Posterior vena cava (tissue), 2 donors: ENCODE measurements at regions of chr10 and their contacts with region 1.

Region 1: GRCh38 chr10:21732067-21732772 is 198.2 kb downstream of the MLLT10 start:
- DNase-seq: peak; percentile 82

Region 2: DNA sequence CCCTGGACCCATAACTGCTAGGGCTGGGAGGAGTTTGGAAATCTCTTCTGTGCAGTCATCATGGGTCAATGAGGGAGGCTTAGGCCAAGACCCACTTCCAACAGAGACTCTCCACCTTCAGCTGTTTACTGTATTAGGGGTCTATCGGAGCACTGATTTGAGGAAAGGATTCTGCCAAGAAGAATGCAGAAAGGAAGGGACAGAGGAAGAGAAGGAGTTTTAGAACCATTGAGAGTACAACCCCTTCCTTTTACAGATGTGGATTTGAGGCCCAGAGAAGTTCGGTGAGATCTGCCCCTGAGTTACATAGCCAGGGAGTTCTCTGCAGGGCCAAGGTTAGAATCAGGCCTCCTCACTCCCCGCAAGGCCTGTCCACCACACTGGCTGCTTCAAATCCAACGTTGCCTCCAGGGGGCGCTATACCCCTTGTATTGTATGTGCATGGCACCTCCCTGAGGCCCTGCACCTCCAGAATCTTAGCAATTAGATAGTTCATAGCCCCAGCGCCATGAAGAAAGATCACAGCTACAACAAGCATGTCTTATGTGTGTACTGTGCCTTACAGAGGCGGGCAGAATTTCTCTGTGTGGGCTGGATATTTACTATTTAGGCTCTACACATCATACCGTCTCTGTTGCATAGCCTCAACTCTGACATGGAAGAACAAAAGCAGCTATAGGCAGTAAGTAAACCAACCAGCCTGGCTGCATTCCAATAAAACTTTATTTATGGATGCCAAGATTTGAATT is 453.6 kb before region 1 on chr10:
- intact Hi-C with region 1: loop called in 1 of 2 experiments (anchors 10 kb)
- DNase-seq: peak; percentile 97

Region 3: DNA sequence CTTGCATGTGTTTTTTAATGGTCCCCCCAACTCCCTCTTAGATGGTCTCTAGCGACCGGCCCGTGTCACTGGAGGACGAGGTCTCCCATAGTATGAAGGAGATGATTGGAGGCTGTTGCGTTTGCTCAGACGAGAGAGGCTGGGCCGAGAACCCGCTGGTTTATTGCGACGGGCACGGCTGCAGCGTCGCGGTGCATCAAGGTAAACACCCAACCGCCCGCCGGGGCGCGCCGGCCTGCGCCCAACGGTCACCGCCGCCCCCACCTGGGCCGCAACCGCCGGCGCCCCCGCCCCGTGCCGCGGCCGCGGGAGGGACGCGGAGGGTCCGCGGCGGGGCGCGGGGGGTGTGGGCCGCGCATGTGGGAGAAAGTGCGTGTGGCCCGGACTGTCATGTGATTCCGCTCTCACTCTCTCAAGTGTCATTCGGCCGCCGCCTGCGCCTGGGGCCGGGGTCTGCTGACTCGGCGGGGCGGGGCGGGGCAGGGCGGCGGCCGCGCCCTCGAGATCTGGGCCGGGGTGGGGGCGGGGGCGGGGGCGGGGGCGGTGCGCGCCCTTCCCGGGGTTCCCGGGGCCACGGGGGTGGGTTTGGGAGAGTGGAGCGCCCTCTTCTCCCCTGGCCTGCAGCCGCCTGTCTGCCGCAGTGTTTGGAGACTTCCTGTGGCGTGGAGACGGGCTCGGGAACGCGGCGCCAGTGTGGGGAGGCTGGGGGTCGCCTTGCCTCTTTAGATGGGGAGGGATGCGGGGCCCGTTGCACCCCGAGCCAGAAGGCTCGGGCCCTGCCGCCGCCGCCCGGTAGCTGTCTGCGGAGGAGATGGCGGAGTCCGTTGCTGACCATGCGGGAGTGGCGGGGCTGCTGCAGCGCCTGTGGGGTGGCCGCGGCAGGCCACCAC is 197.4 kb before region 1 on chr10:
- intact Hi-C with region 1: loop called in 1 of 2 experiments (anchors 5 kb)
- DNase-seq: peak; percentile 87

Region 4: GRCh38 chr10:21813946-21814345 is 81.7 kb after region 1 on chr10:
- intact Hi-C with region 1: no loop called
- DNase-seq: no peak